SK-N-SH (cell line): ENCODE measurements at regions of chr19 and their contacts with region 1.

Region 1: DNA sequence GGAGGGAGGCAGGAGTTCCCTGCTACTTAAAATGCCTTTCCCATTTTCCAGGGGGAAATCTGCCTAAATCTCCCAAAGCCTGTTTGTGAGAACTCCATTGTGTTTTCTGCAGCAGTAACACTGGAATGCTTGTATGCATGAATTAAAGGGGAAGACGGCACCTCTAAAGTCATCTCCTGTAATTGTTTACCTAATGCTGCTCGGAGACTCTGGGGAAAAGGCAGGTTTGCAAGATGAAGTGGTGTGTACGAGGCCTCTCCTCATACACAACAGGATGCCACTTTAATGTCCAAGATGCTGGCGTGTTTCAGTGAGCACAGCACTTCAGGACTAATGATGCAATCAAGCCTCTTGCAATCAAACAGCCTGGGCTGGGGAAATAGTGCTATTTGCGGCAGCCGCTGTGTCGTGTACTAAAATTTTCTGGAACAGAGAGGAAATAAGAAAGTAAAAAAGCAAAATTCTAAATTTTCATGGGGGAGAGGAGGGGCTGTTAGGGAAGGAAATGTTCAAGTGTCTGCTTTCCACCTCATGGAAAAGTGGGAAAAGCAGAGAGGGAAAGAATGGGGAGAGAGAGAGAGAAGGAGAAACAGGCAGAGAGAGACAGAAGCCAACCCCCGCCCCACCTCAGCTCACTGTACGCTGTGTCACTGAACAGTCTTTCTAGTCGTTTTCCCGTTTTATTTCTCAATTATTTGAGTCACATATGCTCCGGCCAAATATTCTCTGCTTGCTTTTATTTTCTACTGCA is 32.9 kb downstream of the TSHZ3 start:
- DNase-seq: no peak
- H3K4me3 ChIP-seq: no peak overlapping the region
- H3K27ac ChIP-seq: peak overlapping the region in 1 of 2 experiments; percentile 88; a peak in 2 of 4 replicates
- H3K4me1 ChIP-seq: peaks cover 27 to 58% of the 10 kb centered on the region in 2 experiments; a peak in 3 of 4 replicates
- H3K27me3 ChIP-seq: no peaks in the 10 kb centered on the region
- CTCF ChIP-seq: no peak
- EP300 ChIP-seq: no peak
- RAD21 ChIP-seq: no peak

Region 2: DNA sequence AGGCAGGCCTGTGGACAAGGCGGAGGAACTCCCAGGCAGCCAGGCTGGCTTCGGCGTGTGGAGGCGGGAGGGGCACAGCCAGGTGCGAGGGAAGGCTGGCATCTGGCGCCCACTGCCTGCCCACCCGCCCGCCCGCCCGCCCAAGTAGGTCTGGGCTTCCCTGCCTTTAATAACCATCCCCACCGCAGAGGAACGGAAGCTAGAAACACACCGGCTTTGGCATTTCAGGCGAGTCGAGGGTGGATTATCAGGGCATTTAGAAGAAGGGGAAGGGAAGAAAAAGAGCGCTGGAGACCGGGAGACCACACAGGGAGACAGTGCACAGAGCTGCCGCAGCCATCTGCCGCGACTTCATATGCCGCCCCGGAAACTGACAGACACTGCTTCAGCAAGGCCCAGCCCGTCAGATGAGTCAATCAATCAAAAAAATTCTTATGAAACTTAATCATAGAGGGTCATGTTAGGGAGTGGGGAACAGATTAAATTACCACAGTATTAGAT is 166.9 kb before region 1 on chr19:
- CTCF ChIA-PET with region 1: no interaction called
- POLR2A ChIA-PET with region 1: no interaction called
- DNase-seq: no peak
- H3K4me3 ChIP-seq: no peak overlapping the region
- H3K27ac ChIP-seq: no peak overlapping the region
- H3K4me1 ChIP-seq: no peaks in the 10 kb centered on the region; a peak in 1 of 4 replicates
- H3K27me3 ChIP-seq: no peaks in the 10 kb centered on the region
- CTCF ChIP-seq: no peak
- EP300 ChIP-seq: no peak
- RAD21 ChIP-seq: no peak

Region 3: DNA sequence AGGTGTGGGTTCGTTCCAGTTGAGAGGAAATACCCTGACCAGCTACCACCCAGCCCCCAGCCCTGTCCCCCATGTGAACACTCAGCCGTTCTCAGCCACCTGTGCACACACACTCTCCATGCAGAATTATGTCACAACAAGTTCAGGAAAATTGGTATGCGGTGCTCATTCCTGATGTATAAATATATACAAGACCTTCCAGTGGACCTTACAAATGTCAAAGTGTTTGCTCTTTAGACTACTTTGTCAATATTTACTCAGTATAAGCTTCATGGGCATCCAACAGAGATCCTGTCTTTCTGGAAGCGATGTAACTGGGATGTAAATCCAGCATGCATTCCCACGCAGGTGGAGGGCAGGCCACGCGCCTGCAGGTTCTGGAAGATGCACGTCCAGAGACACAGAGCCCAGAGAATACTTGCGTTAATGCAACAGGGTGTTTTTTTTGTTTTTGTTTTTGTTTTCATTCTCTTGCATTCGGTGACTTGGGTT is 35.9 kb before region 1 on chr19:
- CTCF ChIA-PET with region 1: no interaction called
- POLR2A ChIA-PET with region 1: no interaction called
- DNase-seq: no peak
- H3K4me3 ChIP-seq: no peak overlapping the region
- H3K27ac ChIP-seq: no peak overlapping the region
- H3K4me1 ChIP-seq: no peaks in the 10 kb centered on the region; a peak in 1 of 4 replicates
- H3K27me3 ChIP-seq: no peaks in the 10 kb centered on the region
- CTCF ChIP-seq: no peak
- EP300 ChIP-seq: no peak
- RAD21 ChIP-seq: no peak

Region 4: GRCh38 chr19:31329819-31330218 is 13.4 kb after region 1 on chr19:
- CTCF ChIA-PET with region 1: interaction called, 13 read pairs
- POLR2A ChIA-PET with region 1: no interaction called
- DNase-seq: no peak
- H3K4me3 ChIP-seq: no peak overlapping the region
- H3K27ac ChIP-seq: 0 out of 4 replicates have a peak overlapping the region, but pooled peaks of 1 of the 2 experiments have one; percentile 7
- H3K4me1 ChIP-seq: peaks cover 20 to 51% of the 10 kb centered on the region in 2 experiments; a peak in 3 of 4 replicates
- H3K27me3 ChIP-seq: no peaks in the 10 kb centered on the region
- CTCF ChIP-seq: no peak
- EP300 ChIP-seq: no peak
- RAD21 ChIP-seq: no peak

Region 5: GRCh38 chr19:31338069-31338776 is 21.8 kb after region 1 on chr19:
- CTCF ChIA-PET with region 1: interaction called, 10 read pairs
- POLR2A ChIA-PET with region 1: interaction called, 14 read pairs
- DNase-seq: peak; percentile 80
- H3K4me3 ChIP-seq: no peak overlapping the region; a peak in 1 of 4 replicates
- H3K27ac ChIP-seq: peak overlapping the region in 1 of 2 experiments; percentile 98; a peak in 2 of 4 replicates
- H3K4me1 ChIP-seq: peaks cover 42 to 67% of the 10 kb centered on the region in 2 experiments
- H3K27me3 ChIP-seq: no peaks in the 10 kb centered on the region
- CTCF ChIP-seq: peak; percentile 60
- EP300 ChIP-seq: peak in 1 of 2 experiments; percentile 69; a peak in 1 of 4 replicates
- RAD21 ChIP-seq: peak; percentile 73

Region 6: GRCh38 chr19:31349160-31349881 is 32.9 kb after region 1 on chr19 and contains the start of gene TSHZ3:
- CTCF ChIA-PET with region 1: interaction called, 10 read pairs
- POLR2A ChIA-PET with region 1: interaction called, 9 read pairs
- DNase-seq: peak; percentile 89
- H3K4me3 ChIP-seq: peak within 1 kb of the TSS; percentile 85 to 97
- H3K27ac ChIP-seq: peak within 1 kb of the TSS; percentile 75 to 83
- H3K4me1 ChIP-seq: peaks cover 23 to 42% of the 10 kb centered on the region in 2 experiments
- H3K27me3 ChIP-seq: no peaks in the 10 kb centered on the region
- CTCF ChIP-seq: no peak
- EP300 ChIP-seq: no peak
- RAD21 ChIP-seq: no peak
- polyA plus RNA-seq, gene TSHZ3: 3.0 and 3.3 TPM in 2 replicates